B cell (primary cell): ENCODE measurements at regions of chr1 and their contacts with region 1.

Region 1: GRCh38 chr1:160205242-160206035 is at the start of gene PEA15:
- DNase-seq: peak; percentile 77
- ATAC-seq: peak; percentile 57
- H3K4me3 ChIP-seq: peak within 1 kb of the TSS; percentile 44 to 99 (median 92)
- H3K4me3 Mint-ChIP-seq: peak within 1 kb of the TSS; percentile 88
- H3K27ac ChIP-seq: peak within 1 kb of the TSS; percentile 98 to 99
- H3K27ac Mint-ChIP-seq: peak within 1 kb of the TSS; percentile 90
- H3K4me1 ChIP-seq: peaks cover 26 to 35% of the 10 kb centered on the region in 2 donors
- H3K4me1 Mint-ChIP-seq: peaks cover 66% of the 10 kb centered on the region
- H3K27me3 ChIP-seq: no peaks in the 10 kb centered on the region
- H3K27me3 Mint-ChIP-seq: no peaks in the 10 kb centered on the region
- CTCF ChIP-seq: no peak
- total RNA-seq, gene PEA15: 76.7 and 81.7 TPM in 2 replicates

Region 2: DNA sequence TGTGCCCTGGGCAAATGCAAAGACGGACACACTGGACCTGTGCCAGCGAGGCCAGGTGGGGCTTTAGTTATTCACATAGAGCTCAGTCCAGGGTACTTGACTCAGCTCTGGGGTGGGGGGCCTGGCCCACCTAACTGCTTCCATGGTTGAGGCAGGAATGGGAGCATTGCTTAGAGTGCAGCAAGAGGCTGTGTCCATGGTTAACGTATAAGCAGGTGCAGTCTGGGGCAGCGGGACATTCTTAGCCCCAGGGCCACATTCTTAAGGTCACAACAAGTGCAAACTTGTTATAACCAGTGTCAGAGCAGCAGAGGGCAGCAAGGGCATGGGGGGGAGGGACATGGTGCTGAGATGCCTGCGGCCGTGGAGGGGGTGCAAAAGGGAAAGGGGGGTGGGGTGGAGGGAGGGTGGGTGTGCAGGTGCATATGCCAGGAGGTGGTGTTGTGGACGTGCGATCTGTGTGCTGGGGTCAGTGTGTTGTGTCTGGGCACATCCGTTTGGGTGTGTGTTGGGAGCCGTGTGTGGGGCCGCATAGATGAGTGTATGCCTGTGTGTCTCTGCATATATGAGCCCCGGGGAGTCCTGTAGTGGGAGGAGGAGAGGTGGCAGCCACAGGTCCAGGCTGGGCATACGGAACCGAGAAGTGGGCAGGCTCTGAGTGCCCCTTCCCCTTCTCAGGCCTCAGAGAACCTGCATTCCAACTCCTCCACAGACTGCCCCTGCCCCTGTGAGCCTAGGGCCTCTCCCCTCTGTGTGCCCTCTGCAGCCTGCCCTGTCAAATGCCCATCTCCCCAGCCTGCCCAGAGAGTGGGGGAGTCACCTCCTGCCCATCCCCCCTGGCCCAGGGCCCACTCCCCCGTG is 143.8 kb before region 1 on chr1:
- CTCF ChIA-PET with region 1: no interaction called
- POLR2A ChIA-PET with region 1: no interaction called
- intact Hi-C with region 1: no loop called
- DNase-seq: no peak
- ATAC-seq: no peak
- H3K4me3 ChIP-seq: no peak overlapping the region
- H3K4me3 Mint-ChIP-seq: no peak overlapping the region
- H3K27ac ChIP-seq: no peak overlapping the region
- H3K27ac Mint-ChIP-seq: no peak overlapping the region
- H3K4me1 ChIP-seq: no peaks in the 10 kb centered on the region
- H3K4me1 Mint-ChIP-seq: no peaks in the 10 kb centered on the region
- H3K27me3 ChIP-seq: peaks cover 0 to 30% (median 3%) of the 10 kb centered on the region in 4 experiments
- H3K27me3 Mint-ChIP-seq: peaks cover 31% of the 10 kb centered on the region
- CTCF ChIP-seq: no peak

Region 3: DNA sequence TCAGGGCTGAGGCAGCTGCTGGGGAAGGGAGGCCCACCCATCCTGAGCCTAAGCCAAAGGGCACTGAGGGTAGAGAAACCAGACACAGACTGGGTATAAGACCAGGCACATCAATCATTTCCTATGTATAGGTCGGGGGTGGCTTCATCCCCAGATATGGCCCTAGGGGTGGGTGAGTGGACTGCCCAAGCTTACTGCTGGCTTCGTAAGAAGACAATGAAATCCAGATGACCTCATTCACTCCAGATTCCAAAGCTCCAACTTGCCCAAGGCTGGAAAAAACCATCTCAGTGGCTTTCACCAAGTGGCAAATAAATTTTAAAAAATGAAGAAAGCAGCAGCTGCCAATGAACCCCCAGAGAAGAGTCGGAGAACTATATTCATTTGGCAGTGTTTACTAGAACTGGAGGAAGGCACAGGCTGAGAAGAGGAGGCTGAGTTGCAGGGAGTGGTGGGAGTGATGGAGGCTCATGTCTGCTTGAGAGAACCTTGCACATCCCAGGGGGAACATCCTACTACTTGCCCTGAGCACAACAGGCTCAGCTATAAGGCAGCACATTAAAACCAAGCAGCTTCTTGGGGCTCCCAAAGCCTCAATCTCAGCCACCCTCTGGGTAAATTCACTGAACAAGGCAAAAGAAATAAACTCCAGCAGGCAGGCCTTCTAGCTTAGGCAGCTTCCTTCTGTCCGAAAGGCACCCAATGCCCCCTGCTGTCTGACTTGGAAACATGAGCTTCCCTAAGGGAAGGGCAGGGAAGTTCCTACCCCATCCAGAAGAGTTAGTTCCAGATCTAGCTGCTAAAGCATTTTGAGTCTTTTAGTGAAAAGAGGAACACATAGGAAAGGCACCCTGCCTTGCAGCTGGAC is 13.9 kb after region 1 on chr1:
- CTCF ChIA-PET with region 1: interaction called, 34 read pairs
- POLR2A ChIA-PET with region 1: interaction called, 5 read pairs
- intact Hi-C with region 1: no loop called
- DNase-seq: peak; percentile 34
- ATAC-seq: no peak
- H3K4me3 ChIP-seq: no peak overlapping the region
- H3K4me3 Mint-ChIP-seq: no peak overlapping the region
- H3K27ac ChIP-seq: peak overlapping the region in 1 of 2 donors; percentile 13
- H3K27ac Mint-ChIP-seq: peak overlapping the region; percentile 57
- H3K4me1 ChIP-seq: no peaks in the 10 kb centered on the region
- H3K4me1 Mint-ChIP-seq: no peaks in the 10 kb centered on the region
- H3K27me3 ChIP-seq: no peaks in the 10 kb centered on the region
- H3K27me3 Mint-ChIP-seq: no peaks in the 10 kb centered on the region
- CTCF ChIP-seq: no peak

Region 4: DNA sequence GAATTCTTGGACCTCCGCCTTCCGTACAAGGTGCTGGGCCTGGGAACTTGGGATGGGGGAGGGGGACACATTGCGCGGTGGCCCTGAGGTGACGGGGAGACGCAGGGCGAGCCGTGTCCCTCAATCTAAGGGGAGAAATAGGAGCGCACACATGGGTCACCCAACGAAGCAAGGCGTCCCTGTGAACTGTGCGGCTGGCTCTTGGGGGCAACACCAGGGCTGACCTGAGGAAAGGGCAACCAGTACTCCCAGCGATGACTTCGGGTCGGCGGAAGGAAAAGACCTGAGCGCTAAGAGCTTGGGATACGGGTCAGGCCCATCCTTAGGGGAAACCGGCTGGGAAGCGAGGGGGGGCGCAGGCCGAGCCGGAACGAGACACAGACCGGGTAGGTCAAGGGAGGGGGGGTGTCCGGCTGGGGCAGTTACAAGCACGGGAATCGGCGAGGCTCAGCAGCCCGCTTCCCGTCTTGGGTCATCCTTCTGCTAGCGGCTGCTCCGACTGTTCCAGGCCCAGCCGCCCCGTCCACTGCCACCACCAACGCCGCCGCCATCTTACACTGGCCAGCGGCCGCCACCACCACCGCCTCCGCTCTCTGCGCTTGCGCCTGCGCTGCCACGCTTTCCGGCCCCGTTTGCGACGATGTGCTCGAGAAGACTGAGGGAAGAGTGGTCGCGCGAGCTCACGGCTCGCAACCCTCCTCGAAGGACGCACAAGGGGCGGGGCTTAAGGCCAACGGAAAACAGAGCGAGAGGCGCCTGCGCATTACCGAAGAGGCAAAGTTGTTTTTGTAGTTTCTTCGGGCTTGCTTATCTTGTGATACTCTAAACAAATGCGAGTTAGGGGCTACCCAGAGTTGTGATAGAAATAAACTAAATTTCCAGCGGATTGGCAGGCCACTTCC is 56.7 kb after region 1 on chr1 and contains the start of gene DCAF8:
- CTCF ChIA-PET with region 1: interaction called, 3 read pairs
- POLR2A ChIA-PET with region 1: interaction called, 5 read pairs
- intact Hi-C with region 1: loop called (anchors 2 kb)
- DNase-seq: peak; percentile 98
- ATAC-seq: peak; percentile 92
- H3K4me3 ChIP-seq: peak within 1 kb of the TSS; percentile 96 to 100 (median 99)
- H3K4me3 Mint-ChIP-seq: peak within 1 kb of the TSS; percentile 100
- H3K27ac ChIP-seq: peak within 1 kb of the TSS; percentile 96 to 97
- H3K27ac Mint-ChIP-seq: peak within 1 kb of the TSS; percentile 92
- H3K4me1 ChIP-seq: peaks cover 20 to 22% of the 10 kb centered on the region in 2 donors
- H3K4me1 Mint-ChIP-seq: peaks cover 41% of the 10 kb centered on the region
- H3K27me3 ChIP-seq: no peaks in the 10 kb centered on the region
- H3K27me3 Mint-ChIP-seq: no peaks in the 10 kb centered on the region
- CTCF ChIP-seq: no peak
- total RNA-seq, gene DCAF8: 247 and 266 TPM in 2 replicates

Region 5: GRCh38 chr1:160284782-160285344 is 79.4 kb after region 1 on chr1 and contains the start of gene PEX19:
- CTCF ChIA-PET with region 1: interaction called, 40 read pairs
- POLR2A ChIA-PET with region 1: no interaction called
- intact Hi-C with region 1: loop called (anchors 1 kb)
- DNase-seq: peak; percentile 94
- ATAC-seq: peak; percentile 100
- H3K4me3 ChIP-seq: peak within 1 kb of the TSS; percentile 60 to 88 (median 78)
- H3K4me3 Mint-ChIP-seq: peak within 1 kb of the TSS; percentile 97
- H3K27ac ChIP-seq: peak within 1 kb of the TSS; percentile 26 to 75
- H3K27ac Mint-ChIP-seq: peak within 1 kb of the TSS; percentile 96
- H3K4me1 ChIP-seq: peaks cover 9 to 21% of the 10 kb centered on the region in 2 donors
- H3K4me1 Mint-ChIP-seq: peaks cover 21% of the 10 kb centered on the region
- H3K27me3 ChIP-seq: no peaks in the 10 kb centered on the region
- H3K27me3 Mint-ChIP-seq: no peaks in the 10 kb centered on the region
- CTCF ChIP-seq: no peak
- total RNA-seq, gene PEX19: 56.0 and 58.4 TPM in 2 replicates